ENCODE measurements at regions of chr4 and their contacts with region 1.

Region 1: GRCh38 chr4:152112887-152113286 is 352.1 kb upstream of the GATB start:
- DNase-seq: peak; percentile 49
- H3K4me3 Mint-ChIP-seq: no peak overlapping the region
- H3K27ac Mint-ChIP-seq: no peak overlapping the region
- H3K4me1 Mint-ChIP-seq: peaks cover 49% of the 10 kb centered on the region
- H3K27me3 Mint-ChIP-seq: no peaks in the 10 kb centered on the region

Region 2: GRCh38 chr4:152100379-152101201 is 12.3 kb before region 1 on chr4:
- intact Hi-C with region 1: loop called (anchors 1 kb)
- DNase-seq: peak; percentile 94
- H3K4me3 Mint-ChIP-seq: peak overlapping the region; percentile 79
- H3K27ac Mint-ChIP-seq: peak overlapping the region; percentile 95
- H3K4me1 Mint-ChIP-seq: peaks cover 68% of the 10 kb centered on the region
- H3K27me3 Mint-ChIP-seq: no peaks in the 10 kb centered on the region

Region 3: GRCh38 chr4:153204247-153205027 is 1091.5 kb after region 1 on chr4 and contains the start of gene TRIM2:
- intact Hi-C with region 1: no loop called
- DNase-seq: no peak
- H3K4me3 Mint-ChIP-seq: peak within 1 kb of the TSS; percentile 52
- H3K27ac Mint-ChIP-seq: peak within 1 kb of the TSS; percentile 45
- H3K4me1 Mint-ChIP-seq: peaks cover 18% of the 10 kb centered on the region
- H3K27me3 Mint-ChIP-seq: peaks cover 2% of the 10 kb centered on the region
- total RNA-seq, gene TRIM2: 0.21 TPM in 1 of 2 replicates, not detected in the other